GM12878 (cell line): ENCODE measurements at regions of chr20 and their contacts with region 1.

Region 1: GRCh38 chr20:60164582-60164981 is 206.4 kb downstream of the CDH26 start:
- DNase-seq: no peak
- ATAC-seq: no peak
- H3K4me3 ChIP-seq: no peak overlapping the region
- H3K27ac ChIP-seq: no peak overlapping the region
- H3K4me1 ChIP-seq: no peaks in the 10 kb centered on the region
- H3K27me3 ChIP-seq: no peaks in the 10 kb centered on the region
- CTCF ChIP-seq: no peak
- EP300 ChIP-seq: no peak
- POLR2A ChIP-seq: no peak
- RAD21 ChIP-seq: no peak

Region 2: DNA sequence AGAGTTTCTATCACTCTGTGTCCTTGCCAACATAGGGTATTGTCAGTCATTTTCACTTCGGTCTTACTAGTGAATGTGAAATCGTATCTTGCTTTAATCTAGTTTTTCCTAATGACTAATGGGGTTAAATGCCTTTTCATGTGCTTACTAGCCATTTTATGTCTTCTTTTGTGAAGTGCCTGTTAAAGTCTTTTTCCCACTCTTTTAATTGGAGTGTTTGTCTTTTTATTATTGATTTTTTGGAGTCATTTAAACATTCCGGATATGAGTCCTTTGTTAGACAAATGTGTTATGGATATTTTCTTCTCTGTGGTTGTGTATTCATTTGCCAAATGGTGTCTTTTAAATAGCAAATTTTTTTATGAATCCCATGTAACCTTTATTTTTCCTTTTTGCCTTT is 11.8 kb before region 1 on chr20:
- CTCF ChIA-PET with region 1: no interaction called
- POLR2A ChIA-PET with region 1: no interaction called
- RAD21 ChIA-PET with region 1: no interaction called
- SMC1A ChIA-PET with region 1: no interaction called
- in situ Hi-C with region 1: no loop called
- intact Hi-C with region 1: no loop called
- DNase-seq: no peak
- ATAC-seq: no peak
- H3K4me3 ChIP-seq: no peak overlapping the region
- H3K27ac ChIP-seq: no peak overlapping the region
- H3K4me1 ChIP-seq: no peaks in the 10 kb centered on the region
- H3K27me3 ChIP-seq: no peaks in the 10 kb centered on the region
- CTCF ChIP-seq: no peak
- EP300 ChIP-seq: no peak
- POLR2A ChIP-seq: no peak
- RAD21 ChIP-seq: no peak

Region 3: GRCh38 chr20:60200305-60200918 is 35.8 kb after region 1 on chr20:
- CTCF ChIA-PET with region 1: interaction called, 3 read pairs
- POLR2A ChIA-PET with region 1: no interaction called
- RAD21 ChIA-PET with region 1: interaction called, 12 read pairs
- SMC1A ChIA-PET with region 1: interaction called, 7 read pairs
- in situ Hi-C with region 1: no loop called
- intact Hi-C with region 1: no loop called
- DNase-seq: no peak
- ATAC-seq: peak; percentile 20; the same call in 2 of the 3 replicates
- H3K4me3 ChIP-seq: no peak overlapping the region
- H3K27ac ChIP-seq: no peak overlapping the region
- H3K4me1 ChIP-seq: no peaks in the 10 kb centered on the region
- H3K27me3 ChIP-seq: no peaks in the 10 kb centered on the region
- CTCF ChIP-seq: no peak
- EP300 ChIP-seq: no peak
- POLR2A ChIP-seq: no peak
- RAD21 ChIP-seq: no peak

Region 4: DNA sequence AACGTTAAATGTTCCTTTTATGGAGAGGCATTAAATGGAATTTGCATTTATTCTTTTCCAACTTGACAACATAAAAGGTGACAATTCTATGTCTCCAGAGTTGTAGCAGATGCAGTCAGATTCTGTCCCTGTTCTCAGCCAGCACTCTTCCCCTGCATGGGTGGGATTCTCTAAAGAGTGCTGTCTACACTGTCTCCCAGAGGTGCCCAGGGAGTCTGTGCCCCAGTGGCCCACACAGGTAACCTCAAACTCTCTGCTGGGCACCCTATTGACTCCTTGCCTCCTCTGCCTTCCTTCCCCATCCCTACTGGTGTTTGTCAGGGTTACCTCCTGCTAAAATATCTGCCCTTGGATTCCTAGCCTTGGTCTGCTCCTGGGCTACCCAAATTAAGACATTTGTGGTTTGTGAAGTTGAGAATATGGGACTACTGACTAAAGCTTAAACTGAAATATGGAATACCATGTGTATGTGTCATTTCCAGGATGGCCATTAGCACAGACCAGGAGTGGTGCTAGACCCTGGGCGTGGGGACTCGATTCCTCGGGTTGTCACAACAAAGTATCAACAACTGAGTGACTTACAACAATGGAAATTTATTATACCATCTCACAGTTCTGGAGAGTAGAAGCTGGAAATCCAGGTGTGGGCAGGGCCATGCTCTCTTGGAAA is 78.4 kb after region 1 on chr20:
- CTCF ChIA-PET with region 1: no interaction called
- POLR2A ChIA-PET with region 1: no interaction called
- RAD21 ChIA-PET with region 1: no interaction called
- SMC1A ChIA-PET with region 1: no interaction called
- in situ Hi-C with region 1: no loop called
- intact Hi-C with region 1: no loop called
- DNase-seq: no peak
- ATAC-seq: no peak
- H3K4me3 ChIP-seq: no peak overlapping the region
- H3K27ac ChIP-seq: no peak overlapping the region
- H3K4me1 ChIP-seq: no peaks in the 10 kb centered on the region
- H3K27me3 ChIP-seq: no peaks in the 10 kb centered on the region
- CTCF ChIP-seq: no peak
- EP300 ChIP-seq: no peak
- POLR2A ChIP-seq: no peak
- RAD21 ChIP-seq: no peak